ENCODE measurements at regions of chr16 and their contacts with region 1.

Region 1: GRCh38 chr16:47492428-47493377 is 31.6 kb downstream of the PHKB start:
- DNase-seq: peak; percentile 82
- H3K4me3 ChIP-seq: peak overlapping the region; percentile 69
- H3K27ac ChIP-seq: peak overlapping the region; percentile 97
- H3K4me1 ChIP-seq: peaks cover 60% of the 10 kb centered on the region
- CTCF ChIP-seq: no peak

Region 2: GRCh38 chr16:46973207-46973995 is 519.3 kb before region 1 on chr16 and contains the start of gene DNAJA2:
- CTCF ChIA-PET with region 1: no interaction called
- POLR2A ChIA-PET with region 1: no interaction called
- intact Hi-C with region 1: loop called (anchors 10 kb)
- DNase-seq: peak; percentile 90
- H3K4me3 ChIP-seq: peak within 1 kb of the TSS; percentile 87
- H3K27ac ChIP-seq: peak within 1 kb of the TSS; percentile 80
- H3K4me1 ChIP-seq: peaks cover 43% of the 10 kb centered on the region
- CTCF ChIP-seq: no peak
- total RNA-seq, gene DNAJA2: 40.8 and 43.3 TPM in 2 replicates

Region 3: DNA sequence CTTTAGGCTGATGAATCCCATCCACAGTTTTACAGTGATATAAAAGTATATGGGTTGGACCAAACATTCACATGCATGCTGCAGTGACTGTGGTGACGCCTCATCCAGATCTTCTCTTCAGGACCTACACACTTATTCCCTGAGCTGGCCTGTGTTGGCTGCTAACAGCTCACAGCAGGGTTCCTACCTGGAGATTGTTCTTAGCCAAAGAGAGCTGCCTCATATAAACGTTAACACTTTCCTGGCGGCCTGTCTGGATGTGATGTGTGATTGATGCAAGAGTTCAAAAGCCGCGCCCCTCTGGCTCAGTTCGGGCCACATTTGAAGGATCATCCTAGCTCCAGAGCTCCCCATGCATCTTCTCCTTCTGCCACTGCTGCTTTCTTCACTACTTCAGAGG is 256.0 kb before region 1 on chr16:
- CTCF ChIA-PET with region 1: no interaction called
- POLR2A ChIA-PET with region 1: no interaction called
- intact Hi-C with region 1: no loop called
- DNase-seq: no peak
- H3K4me3 ChIP-seq: no peak overlapping the region
- H3K27ac ChIP-seq: no peak overlapping the region
- H3K4me1 ChIP-seq: no peaks in the 10 kb centered on the region
- CTCF ChIP-seq: no peak

Region 4: GRCh38 chr16:47311738-47312505 is 180.8 kb before region 1 on chr16:
- CTCF ChIA-PET with region 1: no interaction called
- POLR2A ChIA-PET with region 1: interaction called, 6 read pairs
- intact Hi-C with region 1: loop called (anchors 5 kb)
- DNase-seq: peak; percentile 49
- H3K4me3 ChIP-seq: peak overlapping the region; percentile 43
- H3K27ac ChIP-seq: peak overlapping the region; percentile 80
- H3K4me1 ChIP-seq: peaks cover 31% of the 10 kb centered on the region
- CTCF ChIP-seq: no peak

Region 5: DNA sequence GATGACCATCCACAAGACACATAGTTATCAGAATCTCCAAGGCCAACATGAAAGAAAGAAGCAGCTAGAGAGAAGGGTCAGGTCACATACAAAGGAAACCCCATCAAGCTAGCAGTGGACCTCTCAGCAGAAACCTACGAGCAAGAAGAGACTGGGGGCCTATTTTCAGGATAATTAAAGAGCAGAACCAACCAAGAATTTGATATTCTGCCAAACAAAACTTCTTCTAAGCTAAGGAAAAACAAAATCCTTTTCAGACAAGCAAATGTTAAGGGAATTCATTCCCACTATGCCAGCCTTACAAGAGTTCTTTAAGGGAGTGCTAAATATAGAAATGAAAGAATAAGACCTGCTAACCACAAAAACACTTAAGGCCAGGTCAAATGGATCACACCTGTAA is 79.7 kb before region 1 on chr16:
- CTCF ChIA-PET with region 1: no interaction called
- POLR2A ChIA-PET with region 1: no interaction called
- intact Hi-C with region 1: no loop called
- DNase-seq: no peak
- H3K4me3 ChIP-seq: no peak overlapping the region
- H3K27ac ChIP-seq: no peak overlapping the region
- H3K4me1 ChIP-seq: no peaks in the 10 kb centered on the region
- CTCF ChIP-seq: no peak

Region 6: GRCh38 chr16:47460711-47461597 is 31.7 kb before region 1 on chr16 and contains the starts of genes ITFG1 and PHKB:
- CTCF ChIA-PET with region 1: interaction called, 3 read pairs
- POLR2A ChIA-PET with region 1: interaction called, 60 read pairs
- intact Hi-C with region 1: loop called (anchors 1 kb)
- DNase-seq: peak; percentile 96
- H3K4me3 ChIP-seq: peak within 1 kb of the TSS; percentile 89
- H3K27ac ChIP-seq: peak within 1 kb of the TSS; percentile 82
- H3K4me1 ChIP-seq: peaks cover 48% of the 10 kb centered on the region
- CTCF ChIP-seq: 0 out of 2 replicates have a peak, but pooled peaks have one; percentile 4
- total RNA-seq, gene ITFG1: 18.2 and 33.7 TPM in 2 replicates
- total RNA-seq, gene PHKB: 56.9 and 68.1 TPM in 2 replicates

Region 7: GRCh38 chr16:47467496-47467895 is 25.2 kb before region 1 on chr16:
- CTCF ChIA-PET with region 1: no interaction called
- POLR2A ChIA-PET with region 1: interaction called, 60 read pairs
- intact Hi-C with region 1: no loop called
- DNase-seq: no peak
- H3K4me3 ChIP-seq: no peak overlapping the region
- H3K27ac ChIP-seq: no peak overlapping the region
- H3K4me1 ChIP-seq: peaks cover 36% of the 10 kb centered on the region
- CTCF ChIP-seq: no peak

Region 8: DNA sequence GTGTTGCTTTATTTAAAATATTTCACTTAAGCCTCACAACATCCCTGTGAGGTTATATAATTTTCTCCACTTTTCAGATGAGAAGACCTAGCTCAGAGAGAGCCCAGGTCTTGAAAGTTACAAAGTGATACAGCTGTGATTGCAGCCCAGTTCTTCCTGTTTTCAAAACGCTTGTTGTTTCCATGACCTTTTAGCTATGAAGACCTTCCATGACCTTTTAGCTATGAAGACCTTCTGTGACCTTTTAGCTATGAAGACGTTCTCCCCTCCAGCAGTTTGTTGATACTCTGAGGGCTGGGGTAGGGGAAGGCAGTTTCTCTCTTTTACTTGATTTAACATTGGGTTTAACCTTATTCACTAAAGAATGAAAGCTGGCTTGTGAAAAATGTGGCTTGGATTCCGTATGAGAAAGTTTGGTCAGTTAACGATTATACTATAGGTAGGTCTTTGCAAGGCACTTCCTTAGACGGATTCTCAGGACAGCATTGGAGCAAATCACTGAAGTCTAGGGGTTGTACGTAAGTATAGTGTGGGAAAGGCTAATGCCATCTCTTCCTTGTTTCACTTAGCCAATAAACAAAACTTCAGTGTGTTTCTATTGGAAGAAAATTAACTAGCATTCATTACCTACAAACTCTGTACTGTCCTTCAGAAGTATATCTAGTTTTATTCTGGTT is 10.9 kb before region 1 on chr16:
- CTCF ChIA-PET with region 1: no interaction called
- POLR2A ChIA-PET with region 1: interaction called, 37 read pairs
- intact Hi-C with region 1: no loop called
- DNase-seq: peak; percentile 35
- H3K4me3 ChIP-seq: no peak overlapping the region
- H3K27ac ChIP-seq: no peak overlapping the region
- H3K4me1 ChIP-seq: peaks cover 11% of the 10 kb centered on the region
- CTCF ChIP-seq: no peak

Region 9: DNA sequence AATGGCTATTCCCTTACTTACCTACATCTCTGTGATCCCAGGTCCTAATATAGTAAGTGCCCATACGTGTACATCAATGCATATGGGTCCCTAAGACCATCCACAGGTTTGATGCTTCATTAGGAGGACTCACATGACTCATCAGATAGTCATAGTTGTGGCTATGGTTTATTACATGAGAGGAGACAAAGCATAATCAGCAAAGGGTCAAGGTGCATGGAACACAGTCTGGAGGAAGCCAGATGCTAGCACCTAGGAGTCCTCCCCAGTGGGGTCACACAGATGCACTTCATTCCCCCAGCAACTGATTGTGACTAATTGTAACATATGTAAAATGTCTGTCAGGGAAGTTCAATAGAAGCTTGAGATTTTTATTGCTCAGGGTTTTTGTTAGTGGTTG is 11.2 kb after region 1 on chr16:
- CTCF ChIA-PET with region 1: no interaction called
- POLR2A ChIA-PET with region 1: interaction called, 18 read pairs
- intact Hi-C with region 1: no loop called
- DNase-seq: no peak
- H3K4me3 ChIP-seq: no peak overlapping the region
- H3K27ac ChIP-seq: no peak overlapping the region
- H3K4me1 ChIP-seq: peaks cover 12% of the 10 kb centered on the region
- CTCF ChIP-seq: no peak